Activated naive CD4-positive, alpha-beta T cell treated with anti-CD3 and anti-CD28 coated beads for 36 hours (primary cell): ENCODE measurements at regions of chr20 and their contacts with region 1.

Region 1: GRCh38 chr20:6767536-6768227 is at the start of gene BMP2:
- DNase-seq: no peak
- H3K4me3 Mint-ChIP-seq: no peak within 1 kb of the TSS
- H3K27ac Mint-ChIP-seq: no peak within 1 kb of the TSS
- H3K4me1 Mint-ChIP-seq: peaks cover 8% of the 10 kb centered on the region
- H3K27me3 Mint-ChIP-seq: peaks cover 56% of the 10 kb centered on the region
- total RNA-seq, gene BMP2: not detected

Region 2: DNA sequence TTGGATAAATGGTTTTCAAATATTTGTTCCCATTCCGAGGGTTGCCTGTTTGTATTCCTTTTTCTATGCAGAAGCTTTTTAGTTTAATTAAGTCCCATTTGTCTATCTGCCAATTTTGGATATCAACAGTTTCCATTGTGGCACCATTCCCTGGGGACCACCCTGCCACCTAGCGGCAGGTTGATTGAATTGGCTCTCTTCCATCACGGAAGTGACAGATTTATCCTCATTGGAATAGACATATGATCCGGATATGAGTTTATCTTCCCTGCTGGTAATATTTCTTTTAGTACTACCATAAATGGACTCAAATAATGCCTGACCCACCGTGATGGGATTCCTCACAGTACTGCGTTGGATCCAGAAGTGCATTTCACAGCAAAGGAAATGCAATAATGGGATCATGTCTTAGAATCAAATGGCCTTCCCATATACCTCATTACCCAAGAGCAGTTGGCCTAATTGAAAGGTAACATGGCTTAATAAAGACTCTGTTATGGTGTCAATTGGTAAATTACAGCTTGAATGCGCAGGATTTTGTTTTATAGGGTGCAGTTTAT is 326.8 kb after region 1 on chr20:
- CTCF ChIA-PET with region 1: no interaction called
- intact Hi-C with region 1: loop called (anchors 2 kb)
- DNase-seq: peak; percentile 8
- H3K4me3 Mint-ChIP-seq: no peak overlapping the region
- H3K27ac Mint-ChIP-seq: no peak overlapping the region
- H3K4me1 Mint-ChIP-seq: no peaks in the 10 kb centered on the region
- H3K27me3 Mint-ChIP-seq: no peaks in the 10 kb centered on the region

Region 3: DNA sequence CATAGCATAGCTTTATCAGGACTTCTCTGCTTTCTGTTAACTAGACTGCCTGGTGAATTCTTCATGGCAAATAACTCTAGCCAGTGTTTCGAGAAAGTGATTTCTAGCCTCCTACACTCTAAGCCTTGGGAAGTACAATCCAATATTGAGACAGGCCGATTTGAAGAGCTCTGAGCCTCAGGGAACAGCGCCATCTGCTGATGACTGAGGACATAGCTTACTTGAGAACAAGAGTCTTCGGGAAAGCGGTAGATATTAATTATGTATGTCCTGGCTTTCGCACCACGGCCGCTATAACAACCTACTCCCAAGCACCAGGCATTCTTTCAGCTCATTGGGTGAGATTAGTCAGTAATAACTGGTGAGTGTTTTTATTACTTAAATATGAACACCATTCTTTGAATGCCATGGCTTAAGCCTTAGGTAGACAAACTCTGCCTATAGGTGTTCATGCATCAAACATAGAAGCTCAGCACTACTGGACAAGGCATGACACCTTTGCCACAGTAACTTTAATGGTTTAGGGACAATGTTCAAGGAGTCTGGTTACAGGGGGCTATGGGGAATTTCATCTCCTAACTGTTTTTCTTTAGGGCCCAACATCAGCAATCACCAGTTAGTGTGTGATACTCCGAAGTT is 518.4 kb after region 1 on chr20:
- CTCF ChIA-PET with region 1: interaction called, 6 read pairs
- intact Hi-C with region 1: loop called (anchors 2 kb)
- DNase-seq: peak; percentile 55
- H3K4me3 Mint-ChIP-seq: no peak overlapping the region
- H3K27ac Mint-ChIP-seq: no peak overlapping the region
- H3K4me1 Mint-ChIP-seq: no peaks in the 10 kb centered on the region
- H3K27me3 Mint-ChIP-seq: no peaks in the 10 kb centered on the region

Region 4: DNA sequence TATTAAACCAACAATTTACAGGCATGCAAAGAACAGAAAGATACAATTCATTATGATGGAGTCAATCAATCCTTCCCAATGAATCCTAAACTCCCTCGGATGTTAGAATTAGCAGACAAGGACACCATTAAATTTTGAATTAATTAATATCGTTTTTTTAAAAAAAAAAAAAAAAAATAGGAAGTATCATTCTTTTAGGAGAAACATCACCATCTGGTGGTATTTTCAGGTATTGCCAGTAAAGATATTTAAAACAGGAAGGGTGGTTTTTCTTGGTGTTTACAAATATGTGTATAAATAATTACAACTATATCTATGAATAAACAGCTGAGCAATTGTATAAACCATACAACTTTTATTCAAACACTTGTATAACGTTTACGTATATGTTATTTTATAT is 608.2 kb after region 1 on chr20:
- CTCF ChIA-PET with region 1: interaction called, 3 read pairs
- intact Hi-C with region 1: loop called (anchors 2 kb)
- DNase-seq: no peak
- H3K4me3 Mint-ChIP-seq: no peak overlapping the region
- H3K27ac Mint-ChIP-seq: no peak overlapping the region
- H3K4me1 Mint-ChIP-seq: no peaks in the 10 kb centered on the region
- H3K27me3 Mint-ChIP-seq: no peaks in the 10 kb centered on the region